Posterior vena cava (tissue), 2 donors: ENCODE measurements at regions of chr18 and their contacts with region 1.

Region 1: GRCh38 chr18:8696749-8697211 is 8.6 kb upstream of the MTCL1 start:
- DNase-seq: peak; percentile 92

Region 2: GRCh38 chr18:8188184-8188583 is 508.6 kb before region 1 on chr18:
- intact Hi-C with region 1: no loop called
- DNase-seq: no peak

Region 3: GRCh38 chr18:8212893-8213780 is 483.6 kb before region 1 on chr18:
- intact Hi-C with region 1: no loop called
- DNase-seq: no peak

Region 4: DNA sequence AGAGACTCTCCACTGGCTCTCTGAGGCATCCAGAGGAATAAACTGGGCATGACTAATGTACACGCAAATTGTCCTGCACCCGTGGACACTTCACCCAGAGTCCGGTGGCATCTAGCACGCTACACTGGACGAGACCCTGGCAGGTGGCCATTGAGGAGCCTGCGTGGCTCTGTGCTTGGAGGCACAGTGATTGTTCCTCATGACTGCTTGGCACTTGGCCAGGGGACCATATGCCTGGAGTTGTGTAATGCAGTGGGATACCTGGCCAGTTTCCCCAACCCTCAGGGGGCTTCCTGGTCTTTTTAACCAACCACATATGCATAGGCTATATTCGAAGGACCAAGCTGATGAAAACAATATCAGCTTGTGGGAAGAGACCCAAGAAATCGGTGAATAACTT is 75.2 kb after region 1 on chr18:
- intact Hi-C with region 1: no loop called
- DNase-seq: no peak

Region 5: DNA sequence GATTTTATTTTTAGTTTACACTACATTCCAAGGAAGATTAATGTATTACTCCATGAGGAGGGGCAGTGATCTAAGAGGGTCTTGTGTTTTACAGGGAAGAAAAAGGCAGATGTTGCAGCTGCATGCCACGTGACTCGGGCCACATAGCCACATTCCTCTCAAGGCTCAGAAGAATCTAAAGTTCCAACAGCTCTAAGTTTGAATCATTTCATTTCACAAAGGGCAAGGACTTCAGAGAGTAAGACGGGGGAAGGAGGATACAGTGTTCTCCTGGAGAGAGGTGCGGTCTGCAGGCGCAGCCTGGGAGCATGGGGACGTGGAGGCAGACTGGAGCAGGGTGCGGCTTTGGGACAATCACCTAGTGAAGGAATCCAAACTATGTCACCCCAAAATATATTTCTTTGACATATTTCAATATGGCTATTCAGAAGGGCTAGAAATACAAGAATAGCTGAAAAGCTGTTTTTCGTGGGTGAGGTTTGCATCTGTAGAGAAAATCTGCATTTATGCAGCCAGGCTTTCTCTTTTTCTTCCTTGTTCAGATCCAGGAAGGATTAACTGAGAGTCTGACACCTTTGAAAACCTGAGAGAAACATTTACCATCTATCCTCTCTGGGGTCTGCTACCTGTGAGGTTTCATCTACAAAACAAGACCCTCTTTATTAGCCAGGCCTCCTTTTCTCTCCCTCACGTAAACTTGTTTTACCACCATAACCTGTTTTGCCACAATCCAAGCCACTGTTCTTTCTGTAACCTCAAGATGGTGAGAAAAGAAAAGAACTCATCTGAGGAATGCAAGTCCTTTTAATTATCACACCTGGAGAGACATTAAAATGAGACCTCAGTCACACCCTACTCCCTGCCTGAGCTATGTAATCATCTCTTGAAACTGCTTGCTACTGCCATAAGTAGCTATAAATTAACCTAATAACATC is 240.6 kb after region 1 on chr18:
- intact Hi-C with region 1: no loop called
- DNase-seq: no peak

Region 6: DNA sequence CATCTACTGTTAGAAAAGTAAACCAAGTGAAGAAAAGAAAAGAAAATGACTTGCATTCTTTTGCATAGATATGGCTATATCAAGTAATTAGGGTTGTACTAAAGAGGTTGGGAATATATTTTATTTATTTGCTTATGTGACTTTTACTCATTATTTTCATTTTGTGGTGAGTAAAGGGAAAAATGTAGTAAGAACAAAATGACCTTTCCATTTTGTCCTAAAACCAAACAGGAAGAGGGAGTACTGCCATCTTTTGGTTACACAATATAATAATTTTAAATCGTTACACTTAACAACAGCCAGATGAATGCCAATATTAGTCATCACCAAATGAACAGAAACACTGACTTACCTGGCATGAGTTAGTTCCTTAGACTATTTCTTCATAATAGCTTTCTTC is 358.4 kb after region 1 on chr18:
- intact Hi-C with region 1: loop called in 1 of 2 experiments (anchors 10 kb)
- DNase-seq: no peak